Activated CD4-positive, alpha-beta T cell treated with anti-CD3 and anti-CD28 coated beads, Interleukin-2, amount 10 ng/mL, durations not matched to agents 24 days and 14 days (primary cell): ENCODE measurements at regions of chr10 and their contacts with region 1.

Region 1: GRCh38 chr10:62183442-62183841 is 85.2 kb downstream of the RTKN2 start:
- DNase-seq: peak; percentile 90
- H3K4me3 Mint-ChIP-seq: peak overlapping the region; percentile 41
- H3K27ac Mint-ChIP-seq: peak overlapping the region; percentile 92
- H3K4me1 Mint-ChIP-seq: peaks cover 68% of the 10 kb centered on the region
- H3K27me3 Mint-ChIP-seq: no peaks in the 10 kb centered on the region

Region 2: DNA sequence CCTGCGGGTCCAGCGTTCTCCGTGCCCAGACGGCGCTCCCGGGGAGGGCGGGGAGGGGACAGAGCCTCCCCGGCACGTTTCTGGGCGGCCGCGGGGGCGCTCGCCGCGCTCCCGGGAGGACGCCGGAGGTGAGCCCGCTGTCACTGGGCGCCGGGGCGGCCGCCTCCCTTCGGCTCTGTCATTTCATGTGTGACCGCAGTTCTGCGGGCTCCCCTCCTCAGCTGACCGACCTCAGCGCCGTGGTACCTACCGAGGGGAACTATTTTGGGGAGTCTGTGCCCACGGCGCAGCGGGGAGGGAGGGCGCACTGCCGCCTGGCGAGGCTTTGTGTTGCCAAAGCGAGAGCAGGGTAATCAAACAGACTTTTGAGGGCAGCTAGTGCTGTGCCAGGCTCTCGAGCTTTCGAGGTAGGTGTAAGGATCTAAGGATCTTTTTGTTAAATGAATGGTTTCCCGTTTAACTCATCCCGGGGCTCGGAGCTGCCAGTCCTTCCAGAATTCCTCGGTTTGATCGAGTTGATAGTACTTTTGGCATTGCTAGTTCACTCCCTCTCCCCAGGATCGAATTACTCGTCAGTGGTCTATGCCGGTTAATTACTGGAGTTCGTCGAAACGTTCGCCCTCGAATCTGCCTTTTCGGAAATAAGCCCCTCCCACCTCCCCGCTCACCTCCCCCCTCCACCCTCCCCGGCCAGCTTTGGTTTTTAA is 280.1 kb before region 1 on chr10:
- intact Hi-C with region 1: loop called (anchors 1 kb)
- DNase-seq: peak; percentile 92
- H3K4me3 Mint-ChIP-seq: peak overlapping the region; percentile 92
- H3K27ac Mint-ChIP-seq: peak overlapping the region; percentile 95
- H3K4me1 Mint-ChIP-seq: peaks cover 36% of the 10 kb centered on the region
- H3K27me3 Mint-ChIP-seq: no peaks in the 10 kb centered on the region

Region 3: GRCh38 chr10:61992671-61993668 is 190.5 kb before region 1 on chr10:
- intact Hi-C with region 1: loop called (anchors 1 kb)
- DNase-seq: peak; percentile 91
- H3K4me3 Mint-ChIP-seq: peak overlapping the region; percentile 77
- H3K27ac Mint-ChIP-seq: peak overlapping the region; percentile 93
- H3K4me1 Mint-ChIP-seq: peaks cover 65% of the 10 kb centered on the region
- H3K27me3 Mint-ChIP-seq: no peaks in the 10 kb centered on the region

Region 4: DNA sequence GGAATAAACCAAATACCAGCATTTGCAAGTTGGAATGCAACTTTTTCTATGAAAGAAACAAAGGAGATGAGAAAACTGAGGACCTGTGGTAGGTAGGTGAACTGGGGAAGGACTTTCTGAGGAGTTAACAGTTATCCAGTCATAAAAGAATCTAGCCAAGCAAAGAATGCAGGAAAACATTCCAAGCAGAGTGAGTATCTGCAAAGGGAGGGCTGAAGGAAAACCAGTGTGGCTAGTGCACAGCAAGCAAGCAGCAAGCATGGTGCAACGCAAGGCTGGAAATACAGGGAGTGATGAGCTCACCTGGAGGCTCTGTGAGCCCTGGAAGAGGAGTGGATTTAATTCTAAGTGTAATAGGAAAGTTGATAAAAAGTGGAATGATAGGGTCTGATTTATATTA is 41.2 kb after region 1 on chr10:
- intact Hi-C with region 1: loop called (anchors 1 kb)
- DNase-seq: no peak
- H3K4me3 Mint-ChIP-seq: no peak overlapping the region
- H3K27ac Mint-ChIP-seq: peak overlapping the region; percentile 51
- H3K4me1 Mint-ChIP-seq: peaks cover 3% of the 10 kb centered on the region
- H3K27me3 Mint-ChIP-seq: no peaks in the 10 kb centered on the region

Region 5: DNA sequence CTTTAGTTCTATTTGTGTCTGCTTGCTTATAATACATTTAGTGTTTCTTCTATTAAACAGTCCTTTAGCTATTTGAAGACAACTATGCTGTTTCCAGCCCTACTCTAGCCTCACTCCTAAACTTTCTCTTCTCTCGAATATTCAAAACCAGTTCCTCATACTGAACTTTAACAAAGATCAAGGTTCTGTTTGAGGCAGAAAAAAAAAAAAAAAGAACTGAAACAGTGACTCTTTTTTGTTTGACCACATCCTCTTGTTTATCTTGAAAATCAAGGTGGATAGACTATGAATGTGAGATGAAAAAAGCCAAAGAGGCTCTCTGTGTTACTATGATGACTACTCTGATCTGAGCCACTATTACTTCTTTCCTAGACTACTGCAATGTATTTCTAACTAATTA is 345.0 kb after region 1 on chr10:
- intact Hi-C with region 1: no loop called
- DNase-seq: peak; percentile 65
- H3K4me3 Mint-ChIP-seq: peak overlapping the region; percentile 27
- H3K27ac Mint-ChIP-seq: peak overlapping the region; percentile 39
- H3K4me1 Mint-ChIP-seq: peaks cover 33% of the 10 kb centered on the region
- H3K27me3 Mint-ChIP-seq: peaks cover 11% of the 10 kb centered on the region

Region 6: DNA sequence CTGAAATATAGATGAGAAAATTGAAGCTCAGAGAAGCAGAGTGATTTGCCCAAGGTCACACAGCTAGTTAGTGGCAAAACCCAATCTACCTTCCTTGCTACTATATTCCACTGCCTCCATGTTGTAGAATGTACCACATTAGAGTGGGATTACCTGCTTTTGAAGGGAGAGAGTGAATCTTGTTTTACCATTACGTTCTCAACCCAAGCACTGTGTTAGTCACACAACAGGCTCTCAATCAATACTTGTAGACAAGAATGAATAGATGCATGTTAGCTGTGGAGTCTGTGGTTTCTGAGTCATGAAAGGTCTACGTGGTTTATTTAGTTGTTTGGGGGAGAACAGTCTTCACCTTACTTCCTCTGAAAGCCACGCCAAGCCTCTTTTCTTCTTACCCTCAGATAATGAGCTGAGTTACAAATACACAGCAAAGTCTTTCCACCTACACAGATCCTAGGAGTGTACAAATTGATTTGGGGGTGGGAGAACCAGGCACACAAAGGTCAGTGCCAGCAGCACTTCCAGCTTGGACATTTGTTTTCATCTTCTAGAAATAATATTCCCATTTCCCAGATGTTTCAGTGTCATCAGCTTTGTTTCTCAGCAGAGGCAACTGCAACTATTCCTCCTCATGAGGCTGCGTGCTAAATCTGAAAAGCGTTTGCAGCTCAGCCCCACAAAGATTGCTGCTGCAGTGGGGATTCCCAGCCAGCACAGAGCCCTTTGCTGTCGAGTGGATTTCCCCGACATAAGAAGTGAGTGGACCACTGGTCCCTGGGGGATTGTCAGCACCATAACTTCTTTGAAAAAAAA is 549.6 kb after region 1 on chr10:
- intact Hi-C with region 1: loop called (anchors 2 kb)
- DNase-seq: peak; percentile 91
- H3K4me3 Mint-ChIP-seq: no peak overlapping the region
- H3K27ac Mint-ChIP-seq: no peak overlapping the region
- H3K4me1 Mint-ChIP-seq: peaks cover 43% of the 10 kb centered on the region
- H3K27me3 Mint-ChIP-seq: peaks cover 1% of the 10 kb centered on the region